Psoas muscle (tissue), 8 donors: ENCODE measurements at regions of chr14 and their contacts with region 1.

Region 1: GRCh38 chr14:103225476-103225875 is 102.2 kb downstream of the TNFAIP2 start:
- DNase-seq: no peak
- ATAC-seq: no peak
- H3K4me3 ChIP-seq: no peak overlapping the region
- H3K27ac ChIP-seq: no peak overlapping the region
- H3K4me1 ChIP-seq: no peaks in the 10 kb centered on the region
- H3K27me3 ChIP-seq: peaks cover 0 to 29% (median 9%) of the 10 kb centered on the region in 3 donors
- CTCF ChIP-seq: no peak

Region 2: GRCh38 chr14:102333795-102334705 is 891.4 kb before region 1 on chr14:
- intact Hi-C with region 1: no loop called
- DNase-seq: no peak
- ATAC-seq: no peak
- H3K4me3 ChIP-seq: no peak overlapping the region
- H3K27ac ChIP-seq: no peak overlapping the region
- H3K4me1 ChIP-seq: no peaks in the 10 kb centered on the region
- H3K27me3 ChIP-seq: no peaks in the 10 kb centered on the region
- CTCF ChIP-seq: no peak

Region 3: GRCh38 chr14:103091041-103091882 is 134.2 kb before region 1 on chr14:
- intact Hi-C with region 1: loop called in 1 of 2 experiments (anchors 5 kb)
- DNase-seq: peak; percentile 63 to 74
- ATAC-seq: peak; percentile 48 to 85 (median 72)
- H3K4me3 ChIP-seq: peak overlapping the region; percentile 68
- H3K27ac ChIP-seq: no peak overlapping the region
- H3K4me1 ChIP-seq: no peaks in the 10 kb centered on the region
- H3K27me3 ChIP-seq: peaks cover 0 to 7% (median 2%) of the 10 kb centered on the region in 3 donors
- CTCF ChIP-seq: peak; percentile 35